PC-3 (cell line): ENCODE measurements at regions of chr1 and their contacts with region 1.

Region 1: DNA sequence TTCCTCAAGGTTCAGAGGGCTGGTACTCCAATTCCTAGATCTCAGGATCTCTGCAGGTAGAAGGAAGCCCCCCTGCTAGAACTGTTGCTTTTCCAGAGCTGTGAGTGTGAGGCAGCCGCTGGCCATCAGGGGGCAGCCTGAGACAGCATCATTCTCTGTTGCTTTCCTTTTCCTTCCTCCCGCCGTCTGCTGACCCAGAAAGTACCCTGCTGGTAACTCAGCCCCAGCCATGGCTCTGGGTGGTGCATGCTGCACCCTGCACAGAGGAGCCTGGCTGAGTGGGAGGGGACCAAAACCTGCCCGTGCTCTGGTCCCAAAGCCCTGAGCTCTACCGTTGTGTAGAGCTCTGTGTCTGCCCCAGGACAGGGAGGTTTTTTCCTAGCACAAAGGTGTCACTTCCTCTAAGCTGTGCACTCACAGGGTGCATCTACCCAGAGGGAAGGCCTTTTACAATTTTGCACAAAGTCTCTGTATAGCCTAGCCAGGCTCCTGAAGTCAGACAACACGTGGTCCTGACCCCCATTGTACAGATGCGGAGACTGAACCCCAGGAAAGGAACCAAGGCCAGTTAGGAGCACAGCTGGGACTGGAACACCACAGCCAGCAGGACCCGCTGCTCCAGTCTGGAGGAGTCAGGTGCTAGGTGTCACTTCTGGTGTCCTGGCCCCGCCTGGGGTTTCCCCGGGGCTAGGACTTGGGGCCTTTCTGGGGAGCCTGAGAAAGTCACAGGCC is 5.6 kb upstream of the FAM131C start:
- DNase-seq: peak; percentile 80
- ATAC-seq: peak; percentile 55
- H3K4me3 ChIP-seq: no peak overlapping the region
- H3K27ac ChIP-seq: peak overlapping the region; percentile 8
- H3K4me1 ChIP-seq: peaks cover 35% of the 10 kb centered on the region
- H3K27me3 ChIP-seq: no peaks in the 10 kb centered on the region
- CTCF ChIP-seq: peak; percentile 92

Region 2: DNA sequence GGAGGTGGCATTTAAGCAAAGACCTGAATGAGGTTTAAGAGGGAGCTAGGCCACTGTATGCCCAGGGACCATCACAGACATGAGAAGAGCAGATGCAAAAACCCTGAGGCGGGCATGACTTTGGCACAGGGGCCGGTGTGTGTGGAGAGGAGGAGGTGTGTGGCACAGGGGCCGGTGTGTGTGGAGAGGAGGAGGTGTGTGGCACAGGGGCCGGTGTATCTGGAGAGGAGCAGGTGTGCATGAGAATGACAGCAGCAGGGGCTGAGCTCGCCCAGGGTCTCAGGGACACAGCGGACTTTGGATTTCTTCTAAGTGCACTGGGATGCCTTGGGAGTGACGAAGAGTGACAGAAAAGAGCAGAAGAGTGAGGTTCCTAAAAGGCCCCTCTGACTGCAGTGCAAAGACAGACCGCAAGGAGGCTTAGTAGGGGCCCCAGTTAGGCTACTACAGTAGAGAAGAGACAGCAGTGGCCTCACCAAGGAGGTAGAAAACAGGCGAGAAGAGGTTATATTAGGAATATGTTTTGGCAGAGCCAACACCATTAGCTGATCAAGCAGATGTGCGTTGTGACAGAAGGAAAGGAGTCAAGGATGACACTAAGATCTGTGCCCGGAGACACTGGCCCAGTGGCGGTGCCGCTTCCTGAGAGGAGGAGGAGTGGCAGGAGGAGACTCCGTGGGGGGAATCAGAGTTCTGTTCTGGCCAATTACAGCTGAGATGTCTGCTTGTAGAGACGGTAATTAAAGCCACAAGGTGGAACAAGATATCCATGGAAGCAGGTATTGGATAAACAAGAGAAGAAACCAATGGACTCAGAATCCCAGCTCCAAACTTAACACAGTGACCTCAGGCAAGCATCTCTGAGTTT is 121.6 kb before region 1 on chr1:
- CTCF ChIA-PET with region 1: no interaction called
- POLR2A ChIA-PET with region 1: no interaction called
- intact Hi-C with region 1: no loop called
- DNase-seq: no peak
- ATAC-seq: no peak
- H3K4me3 ChIP-seq: no peak overlapping the region
- H3K27ac ChIP-seq: no peak overlapping the region
- H3K4me1 ChIP-seq: peaks cover 19% of the 10 kb centered on the region
- H3K27me3 ChIP-seq: no peaks in the 10 kb centered on the region
- CTCF ChIP-seq: no peak

Region 3: DNA sequence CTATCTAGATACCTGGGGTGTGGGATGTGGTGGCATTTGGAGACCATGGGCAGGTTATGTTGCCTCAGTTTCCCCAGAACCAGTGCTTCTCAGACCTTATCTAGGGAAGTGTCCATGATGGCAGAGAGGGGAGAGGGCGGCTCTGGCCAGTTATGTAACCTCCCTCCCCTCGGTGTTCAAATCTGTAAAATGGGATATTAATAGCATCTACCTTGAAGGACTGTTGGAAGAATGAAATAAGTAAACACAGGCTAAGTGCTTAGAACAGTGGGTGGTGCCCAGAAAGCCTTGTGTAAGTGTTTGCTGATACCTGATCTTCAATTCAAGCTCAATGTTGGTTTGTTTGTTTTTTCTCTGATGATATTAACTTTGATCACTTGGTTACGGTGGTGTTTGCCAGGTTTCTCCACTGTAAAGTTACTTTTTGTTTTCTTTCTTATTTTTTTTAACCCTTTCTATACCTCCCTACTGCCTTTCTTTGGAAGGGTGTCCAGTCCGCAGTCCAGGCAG is 41.9 kb after region 1 on chr1:
- CTCF ChIA-PET with region 1: interaction called, 11 read pairs
- POLR2A ChIA-PET with region 1: no interaction called
- intact Hi-C with region 1: loop called (anchors 1 kb)
- DNase-seq: peak; percentile 81
- ATAC-seq: peak; percentile 44
- H3K4me3 ChIP-seq: no peak overlapping the region
- H3K27ac ChIP-seq: peak overlapping the region; percentile 58
- H3K4me1 ChIP-seq: peaks cover 42% of the 10 kb centered on the region
- H3K27me3 ChIP-seq: no peaks in the 10 kb centered on the region
- CTCF ChIP-seq: no peak

Region 4: DNA sequence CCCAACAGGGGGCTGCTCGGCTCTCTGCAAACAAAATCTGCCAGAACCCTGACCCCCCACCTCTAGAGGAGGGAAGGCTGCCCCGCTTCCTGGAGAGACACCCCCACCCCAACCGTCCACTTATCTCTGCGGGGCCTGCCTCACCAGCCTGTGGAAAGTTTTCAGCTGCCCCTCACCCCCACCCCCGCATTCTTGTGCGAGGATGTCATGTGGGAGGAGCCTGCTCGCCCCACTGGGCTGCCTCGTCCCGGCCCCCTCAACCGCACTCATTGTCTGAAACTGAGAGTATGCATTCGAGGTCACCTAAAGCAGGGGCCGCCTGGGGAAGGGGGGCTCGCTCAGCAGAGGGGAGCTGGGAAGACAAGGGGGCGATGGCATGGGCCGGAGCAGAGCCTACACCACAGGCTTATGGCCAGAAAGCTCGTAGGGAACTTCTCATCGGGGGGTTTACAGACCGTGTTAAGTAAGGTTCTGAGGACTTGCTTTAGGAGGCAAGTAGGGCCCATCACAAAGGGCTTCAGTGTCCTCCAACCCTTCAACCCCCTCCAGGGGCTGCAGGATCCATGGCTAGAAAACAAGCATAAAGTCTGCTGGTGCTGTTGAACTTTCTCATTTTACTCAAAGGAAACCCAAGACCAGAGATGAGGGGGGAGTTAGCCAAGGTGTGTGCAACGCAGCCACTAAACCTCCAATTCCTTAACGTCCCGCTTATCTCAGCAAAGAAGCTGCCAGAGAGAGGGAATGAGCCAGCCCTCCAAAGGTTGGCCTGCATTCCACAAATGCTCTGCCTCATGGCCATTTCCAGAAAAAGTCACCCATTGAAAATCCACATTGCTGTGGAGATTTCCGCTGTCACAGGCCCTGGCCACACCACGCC is 67.4 kb after region 1 on chr1:
- CTCF ChIA-PET with region 1: interaction called, 5 read pairs
- POLR2A ChIA-PET with region 1: no interaction called
- intact Hi-C with region 1: loop called (anchors 2 kb)
- DNase-seq: peak; percentile 89
- ATAC-seq: peak; percentile 11
- H3K4me3 ChIP-seq: peak overlapping the region; percentile 83
- H3K27ac ChIP-seq: peak overlapping the region; percentile 97
- H3K4me1 ChIP-seq: peaks cover 100% of the 10 kb centered on the region
- H3K27me3 ChIP-seq: no peaks in the 10 kb centered on the region
- CTCF ChIP-seq: no peak

Region 5: DNA sequence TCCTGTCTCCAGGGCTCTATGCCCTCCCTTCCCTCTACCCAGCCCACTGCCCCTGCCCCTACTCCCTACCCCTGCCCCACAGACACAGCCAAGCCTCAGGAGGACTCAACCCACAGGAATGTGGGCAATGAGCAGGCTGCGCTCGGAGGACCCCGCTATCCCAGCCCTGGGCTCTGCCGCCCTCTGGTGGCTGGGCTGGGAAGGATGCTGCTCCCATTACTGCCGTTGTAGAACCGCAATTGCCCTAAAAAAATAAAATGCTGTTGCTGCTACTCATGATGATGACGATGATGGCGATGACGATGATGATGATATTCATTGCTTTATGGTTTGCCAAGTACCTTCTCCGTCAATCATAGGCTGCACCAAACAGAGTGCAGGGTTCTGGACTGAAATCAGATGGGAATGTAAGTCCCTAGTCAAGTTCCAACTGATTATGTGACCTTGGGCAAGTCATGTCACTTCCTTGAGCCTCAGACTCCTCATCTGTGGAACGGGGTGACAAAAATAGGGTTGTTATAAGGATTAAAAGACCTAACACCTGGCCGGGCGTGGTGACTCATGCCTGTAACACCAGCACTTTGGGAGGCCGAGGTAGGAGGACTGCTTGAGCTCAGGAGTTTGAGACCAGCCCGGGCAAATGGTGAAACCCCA is 108.8 kb after region 1 on chr1:
- CTCF ChIA-PET with region 1: interaction called, 4 read pairs
- POLR2A ChIA-PET with region 1: no interaction called
- intact Hi-C with region 1: loop called (anchors 1 kb)
- DNase-seq: peak; percentile 93
- ATAC-seq: peak; percentile 66
- H3K4me3 ChIP-seq: no peak overlapping the region
- H3K27ac ChIP-seq: peak overlapping the region; percentile 86
- H3K4me1 ChIP-seq: peaks cover 64% of the 10 kb centered on the region
- H3K27me3 ChIP-seq: no peaks in the 10 kb centered on the region
- CTCF ChIP-seq: peak; percentile 97

Region 6: GRCh38 chr1:16236511-16237342 is 157.6 kb after region 1 on chr1 and contains the start of gene CPLANE2:
- CTCF ChIA-PET with region 1: interaction called, 4 read pairs
- POLR2A ChIA-PET with region 1: no interaction called
- intact Hi-C with region 1: loop called (anchors 2 kb)
- DNase-seq: peak; percentile 95
- ATAC-seq: peak; percentile 79
- H3K4me3 ChIP-seq: peak within 1 kb of the TSS; percentile 72
- H3K27ac ChIP-seq: peak within 1 kb of the TSS; percentile 65
- H3K4me1 ChIP-seq: peaks cover 22% of the 10 kb centered on the region
- H3K27me3 ChIP-seq: no peaks in the 10 kb centered on the region
- CTCF ChIP-seq: 0 out of 2 replicates have a peak, but pooled peaks have one; percentile 1
- total RNA-seq, gene CPLANE2: 9.6 and 11.6 TPM in 2 replicates

Region 7: GRCh38 chr1:16243936-16244649 is 165.0 kb after region 1 on chr1:
- CTCF ChIA-PET with region 1: interaction called, 6 read pairs
- POLR2A ChIA-PET with region 1: no interaction called
- intact Hi-C with region 1: loop called (anchors 1 kb)
- DNase-seq: peak; percentile 91
- ATAC-seq: peak; percentile 65
- H3K4me3 ChIP-seq: no peak overlapping the region
- H3K27ac ChIP-seq: no peak overlapping the region
- H3K4me1 ChIP-seq: peaks cover 17% of the 10 kb centered on the region
- H3K27me3 ChIP-seq: no peaks in the 10 kb centered on the region
- CTCF ChIP-seq: peak; percentile 90